CD8-positive, alpha-beta T cell (primary cell): ENCODE measurements at regions of chr11 and their contacts with region 1.

Region 1: DNA sequence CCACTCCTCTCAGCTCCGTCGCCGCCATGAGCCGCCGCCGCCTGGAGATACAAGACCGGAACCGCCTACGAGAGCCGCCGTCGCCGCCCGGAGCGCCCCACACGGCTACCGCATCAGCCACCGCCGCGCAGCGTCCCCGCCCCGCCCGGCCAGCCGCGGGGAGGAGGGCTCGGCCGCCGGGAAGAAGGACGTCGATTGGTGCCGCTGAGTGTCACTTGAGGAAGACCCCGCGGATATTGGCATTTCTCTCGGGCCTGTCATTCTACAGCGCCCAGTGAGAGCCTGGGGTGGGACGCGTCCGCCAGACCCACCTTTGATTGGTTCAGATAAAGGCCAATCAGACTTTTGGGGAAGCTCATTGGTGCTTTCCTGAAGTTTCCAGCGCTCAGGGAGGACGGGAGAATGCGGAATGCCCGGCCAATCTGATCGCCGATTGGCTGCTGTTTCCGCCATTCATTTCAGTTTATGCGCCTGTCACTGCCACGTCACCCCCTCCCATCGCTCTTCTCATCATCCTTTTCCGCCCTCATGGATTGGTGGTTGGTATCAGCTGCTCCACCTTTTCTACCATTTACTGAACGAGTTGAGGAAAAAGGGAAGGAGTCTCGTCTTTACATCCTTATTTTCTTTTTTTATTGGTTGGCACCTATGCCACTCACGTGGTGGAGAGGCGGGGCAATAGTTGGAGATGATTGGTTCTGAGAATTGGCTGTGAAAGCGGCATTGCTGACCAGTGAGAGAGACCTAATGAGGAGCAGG is at the start of gene OSBP:
- DNase-seq: peak; percentile 92 to 100 (median 96)
- ATAC-seq: peak; percentile 73
- H3K4me3 ChIP-seq: peak within 1 kb of the TSS; percentile 86 to 96
- H3K4me3 Mint-ChIP-seq: peak within 1 kb of the TSS; percentile 87
- H3K27ac ChIP-seq: peak within 1 kb of the TSS; percentile 92 to 100
- H3K27ac Mint-ChIP-seq: peak within 1 kb of the TSS; percentile 97
- H3K4me1 ChIP-seq: peaks cover 41% of the 10 kb centered on the region
- H3K4me1 Mint-ChIP-seq: peaks cover 46% of the 10 kb centered on the region
- H3K27me3 ChIP-seq: no peaks in the 10 kb centered on the region
- H3K27me3 Mint-ChIP-seq: no peaks in the 10 kb centered on the region
- CTCF ChIP-seq: no peak
- total RNA-seq, gene OSBP: 66.0 to 66.3 TPM

Region 2: GRCh38 chr11:57667736-57668435 is 1947.9 kb before region 1 on chr11 and contains the start of gene ZDHHC5:
- CTCF ChIA-PET with region 1: no interaction called
- POLR2A ChIA-PET with region 1: no interaction called
- intact Hi-C with region 1: loop called (anchors 5 to 10 kb)
- DNase-seq: peak; percentile 99 to 100 (median 99)
- ATAC-seq: peak; percentile 85
- H3K4me3 ChIP-seq: peak within 1 kb of the TSS; percentile 83 to 96
- H3K4me3 Mint-ChIP-seq: peak within 1 kb of the TSS; percentile 85
- H3K27ac ChIP-seq: peak within 1 kb of the TSS; percentile 91 to 99
- H3K27ac Mint-ChIP-seq: peak within 1 kb of the TSS; percentile 97
- H3K4me1 ChIP-seq: peaks cover 41% of the 10 kb centered on the region
- H3K4me1 Mint-ChIP-seq: peaks cover 56% of the 10 kb centered on the region
- H3K27me3 ChIP-seq: no peaks in the 10 kb centered on the region
- H3K27me3 Mint-ChIP-seq: no peaks in the 10 kb centered on the region
- CTCF ChIP-seq: peak; percentile 31
- total RNA-seq, gene ZDHHC5: 65.0 to 66.7 TPM

Region 3: GRCh38 chr11:59263225-59263894 is 352.5 kb before region 1 on chr11:
- CTCF ChIA-PET with region 1: no interaction called
- POLR2A ChIA-PET with region 1: no interaction called
- intact Hi-C with region 1: no loop called
- DNase-seq: peak in 2 of 9 experiments; percentile 12 to 30
- ATAC-seq: no peak
- H3K4me3 ChIP-seq: no peak overlapping the region
- H3K4me3 Mint-ChIP-seq: no peak overlapping the region
- H3K27ac ChIP-seq: no peak overlapping the region
- H3K27ac Mint-ChIP-seq: no peak overlapping the region
- H3K4me1 ChIP-seq: no peaks in the 10 kb centered on the region
- H3K4me1 Mint-ChIP-seq: no peaks in the 10 kb centered on the region
- H3K27me3 ChIP-seq: no peaks in the 10 kb centered on the region
- H3K27me3 Mint-ChIP-seq: peaks cover 2% of the 10 kb centered on the region
- CTCF ChIP-seq: no peak

Region 4: GRCh38 chr11:59550368-59550841 is 65.4 kb before region 1 on chr11:
- CTCF ChIA-PET with region 1: no interaction called
- POLR2A ChIA-PET with region 1: interaction called, 19 read pairs
- intact Hi-C with region 1: loop called (anchors 1 to 2 kb)
- DNase-seq: peak; percentile 68 to 93 (median 79)
- ATAC-seq: peak; percentile 85
- H3K4me3 ChIP-seq: peak overlapping the region; percentile 62 to 67
- H3K4me3 Mint-ChIP-seq: peak overlapping the region; percentile 77
- H3K27ac ChIP-seq: peak overlapping the region; percentile 36 to 48
- H3K27ac Mint-ChIP-seq: peak overlapping the region; percentile 87
- H3K4me1 ChIP-seq: peaks cover 10% of the 10 kb centered on the region
- H3K4me1 Mint-ChIP-seq: peaks cover 23% of the 10 kb centered on the region
- H3K27me3 ChIP-seq: no peaks in the 10 kb centered on the region
- H3K27me3 Mint-ChIP-seq: no peaks in the 10 kb centered on the region
- CTCF ChIP-seq: no peak

Region 5: DNA sequence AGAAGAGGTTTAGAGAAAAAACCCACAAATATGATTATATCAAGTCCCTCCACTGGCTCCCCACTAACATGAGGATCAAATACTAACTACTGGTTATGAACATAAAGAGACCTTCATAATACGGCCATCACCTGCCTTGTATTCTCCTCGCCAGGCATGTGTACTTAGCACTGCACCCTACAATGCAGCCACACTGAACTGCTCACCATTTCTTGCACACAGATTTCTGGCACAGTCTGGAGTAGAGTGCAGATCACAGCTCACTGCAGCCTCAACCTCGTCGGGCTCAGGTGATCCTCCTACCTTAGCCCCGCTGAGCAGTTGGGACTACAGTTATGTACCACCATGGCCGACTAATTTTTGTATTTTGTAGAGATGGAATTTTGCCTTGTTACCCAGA is 13.4 kb before region 1 on chr11:
- CTCF ChIA-PET with region 1: interaction called, 4 read pairs
- POLR2A ChIA-PET with region 1: interaction called, 16 read pairs
- intact Hi-C with region 1: no loop called
- DNase-seq: no peak
- ATAC-seq: no peak
- H3K4me3 ChIP-seq: no peak overlapping the region
- H3K4me3 Mint-ChIP-seq: no peak overlapping the region
- H3K27ac ChIP-seq: no peak overlapping the region
- H3K27ac Mint-ChIP-seq: no peak overlapping the region
- H3K4me1 ChIP-seq: no peaks in the 10 kb centered on the region
- H3K4me1 Mint-ChIP-seq: peaks cover 25% of the 10 kb centered on the region
- H3K27me3 ChIP-seq: no peaks in the 10 kb centered on the region
- H3K27me3 Mint-ChIP-seq: no peaks in the 10 kb centered on the region
- CTCF ChIP-seq: no peak

Region 6: GRCh38 chr11:59668950-59669610 is 53.3 kb after region 1 on chr11 and contains the start of gene PATL1:
- CTCF ChIA-PET with region 1: interaction called, 8 read pairs
- POLR2A ChIA-PET with region 1: interaction called, 58 read pairs
- intact Hi-C with region 1: loop called (anchors 1 kb)
- DNase-seq: peak; percentile 98 to 100 (median 99)
- ATAC-seq: peak; percentile 88
- H3K4me3 ChIP-seq: peak within 1 kb of the TSS; percentile 79 to 98
- H3K4me3 Mint-ChIP-seq: peak within 1 kb of the TSS; percentile 98
- H3K27ac ChIP-seq: peak within 1 kb of the TSS; percentile 98 to 99
- H3K27ac Mint-ChIP-seq: peak within 1 kb of the TSS; percentile 100
- H3K4me1 ChIP-seq: peaks cover 22% of the 10 kb centered on the region
- H3K4me1 Mint-ChIP-seq: peaks cover 43% of the 10 kb centered on the region
- H3K27me3 ChIP-seq: no peaks in the 10 kb centered on the region
- H3K27me3 Mint-ChIP-seq: no peaks in the 10 kb centered on the region
- CTCF ChIP-seq: no peak
- total RNA-seq, gene PATL1: 59.5 to 59.6 TPM